T-cell (primary cell): ENCODE measurements at regions of chr4 and their contacts with region 1.

Region 1: DNA sequence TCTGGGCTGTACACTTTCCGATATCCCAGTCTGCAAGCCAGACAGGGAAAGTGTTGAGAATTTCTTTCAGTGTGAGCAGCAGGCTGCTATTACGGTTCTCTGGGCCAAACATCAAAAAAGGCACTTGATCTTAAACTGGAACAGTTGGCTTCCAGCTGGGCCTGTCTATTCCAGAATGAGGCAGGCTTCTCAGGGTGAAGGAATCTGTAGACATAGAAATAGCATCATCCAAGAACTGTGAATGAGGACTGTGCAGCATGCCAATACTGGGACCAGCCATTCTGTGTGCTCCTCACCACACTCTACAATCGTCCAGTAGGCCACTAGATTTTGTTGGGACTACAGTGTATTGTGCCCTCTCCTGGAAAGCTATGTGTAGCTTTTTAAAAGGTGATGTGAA is 31.1 kb downstream of the ART3 start:
- DNase-seq: no peak
- ATAC-seq: no peak
- H3K4me3 ChIP-seq: no peak overlapping the region
- H3K4me3 Mint-ChIP-seq: no peak overlapping the region
- H3K27ac ChIP-seq: no peak overlapping the region
- H3K27ac Mint-ChIP-seq: no peak overlapping the region
- H3K4me1 ChIP-seq: no peaks in the 10 kb centered on the region
- H3K4me1 Mint-ChIP-seq: no peaks in the 10 kb centered on the region
- H3K27me3 ChIP-seq: no peaks in the 10 kb centered on the region
- H3K27me3 Mint-ChIP-seq: no peaks in the 10 kb centered on the region

Region 2: DNA sequence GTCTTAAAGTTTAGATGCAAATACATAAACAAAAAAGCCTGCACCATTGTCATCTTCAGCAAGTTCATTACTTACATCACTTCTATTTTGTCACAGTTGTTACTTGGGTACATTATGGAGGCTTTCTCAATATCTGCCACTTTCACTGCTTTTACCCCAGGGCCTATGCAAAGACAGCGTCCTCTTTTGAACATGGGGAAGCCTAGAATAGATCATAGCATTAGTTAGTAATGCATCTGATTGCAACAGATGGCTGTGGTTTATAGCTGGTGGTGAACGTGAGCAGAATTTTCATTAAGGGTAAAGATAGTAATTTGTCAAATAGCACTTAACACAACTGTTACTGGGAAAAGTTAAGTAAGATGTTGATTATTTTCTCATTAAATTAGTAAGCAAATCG is 70.5 kb before region 1 on chr4:
- CTCF ChIA-PET with region 1: no interaction called
- POLR2A ChIA-PET with region 1: interaction called in 1 of 2 experiments, 11 read pairs
- DNase-seq: no peak
- ATAC-seq: no peak
- H3K4me3 ChIP-seq: no peak overlapping the region
- H3K4me3 Mint-ChIP-seq: no peak overlapping the region
- H3K27ac ChIP-seq: no peak overlapping the region
- H3K27ac Mint-ChIP-seq: no peak overlapping the region
- H3K4me1 ChIP-seq: no peaks in the 10 kb centered on the region
- H3K4me1 Mint-ChIP-seq: no peaks in the 10 kb centered on the region
- H3K27me3 ChIP-seq: no peaks in the 10 kb centered on the region
- H3K27me3 Mint-ChIP-seq: no peaks in the 10 kb centered on the region

Region 3: GRCh38 chr4:77905644-77906263 is 1800.1 kb after region 1 on chr4:
- CTCF ChIA-PET with region 1: no interaction called
- POLR2A ChIA-PET with region 1: interaction called in 1 of 2 experiments, 13 read pairs
- DNase-seq: no peak
- ATAC-seq: no peak
- H3K4me3 ChIP-seq: no peak overlapping the region
- H3K4me3 Mint-ChIP-seq: no peak overlapping the region
- H3K27ac ChIP-seq: no peak overlapping the region
- H3K27ac Mint-ChIP-seq: no peak overlapping the region
- H3K4me1 ChIP-seq: no peaks in the 10 kb centered on the region
- H3K4me1 Mint-ChIP-seq: peaks cover 0 to 7% (median 0%) of the 10 kb centered on the region in 3 donors
- H3K27me3 ChIP-seq: no peaks in the 10 kb centered on the region
- H3K27me3 Mint-ChIP-seq: no peaks in the 10 kb centered on the region